Endothelial cell of umbilical vein (primary cell): ENCODE measurements at regions of chrX and their contacts with region 1.

Region 1: DNA sequence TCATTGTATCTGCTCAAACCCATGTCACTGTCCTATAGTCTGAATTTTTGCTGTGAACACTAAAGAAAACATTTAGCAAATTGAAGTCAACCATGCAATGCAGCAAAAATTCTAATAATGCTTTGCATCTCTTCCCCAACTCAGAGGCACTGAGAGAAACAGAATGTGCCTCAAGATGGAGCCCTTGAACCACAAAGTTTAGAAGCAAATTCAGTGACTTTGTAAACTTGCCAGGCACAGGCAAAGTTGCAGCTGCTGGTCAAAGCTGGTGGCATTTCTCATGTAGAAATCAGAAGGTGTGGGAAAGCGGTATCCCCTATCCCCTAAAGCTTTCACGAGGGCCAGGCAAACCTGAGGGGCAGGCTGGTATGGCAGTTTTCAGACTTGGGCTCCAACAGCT is 121.7 kb upstream of the DIPK2B start:
- DNase-seq: peak; percentile 67
- H3K4me3 ChIP-seq: no peak overlapping the region
- H3K27ac ChIP-seq: peak overlapping the region; percentile 10
- H3K4me1 ChIP-seq: peaks cover 3% of the 10 kb centered on the region
- H3K27me3 ChIP-seq: no peaks in the 10 kb centered on the region
- CTCF ChIP-seq: peak; percentile 37 to 45
- POLR2A ChIP-seq: no peak

Region 2: GRCh38 chrX:44989995-44990770 is 332.2 kb before region 1 on chrX:
- CTCF ChIA-PET with region 1: no interaction called
- POLR2A ChIA-PET with region 1: no interaction called
- dilution Hi-C with region 1: no loop called
- intact Hi-C with region 1: no loop called
- DNase-seq: no peak
- H3K4me3 ChIP-seq: no peak overlapping the region
- H3K27ac ChIP-seq: no peak overlapping the region
- H3K4me1 ChIP-seq: no peaks in the 10 kb centered on the region
- H3K27me3 ChIP-seq: no peaks in the 10 kb centered on the region
- CTCF ChIP-seq: no peak
- POLR2A ChIP-seq: no peak

Region 3: GRCh38 chrX:45505214-45505613 is 182.8 kb after region 1 on chrX:
- CTCF ChIA-PET with region 1: interaction called, 6 read pairs
- POLR2A ChIA-PET with region 1: no interaction called
- dilution Hi-C with region 1: no loop called
- intact Hi-C with region 1: loop called (anchors 1 kb)
- DNase-seq: peak; percentile 92
- H3K4me3 ChIP-seq: no peak overlapping the region
- H3K27ac ChIP-seq: peak overlapping the region; percentile 96
- H3K4me1 ChIP-seq: peaks cover 35% of the 10 kb centered on the region
- H3K27me3 ChIP-seq: no peaks in the 10 kb centered on the region
- CTCF ChIP-seq: no peak
- POLR2A ChIP-seq: peak; percentile 36

Region 4: GRCh38 chrX:45557390-45557789 is 235.0 kb after region 1 on chrX:
- CTCF ChIA-PET with region 1: no interaction called
- POLR2A ChIA-PET with region 1: no interaction called
- dilution Hi-C with region 1: no loop called
- intact Hi-C with region 1: loop called (anchors 5 kb)
- DNase-seq: peak; percentile 37
- H3K4me3 ChIP-seq: no peak overlapping the region
- H3K27ac ChIP-seq: no peak overlapping the region
- H3K4me1 ChIP-seq: no peaks in the 10 kb centered on the region
- H3K27me3 ChIP-seq: no peaks in the 10 kb centered on the region
- CTCF ChIP-seq: no peak
- POLR2A ChIP-seq: no peak

Region 5: DNA sequence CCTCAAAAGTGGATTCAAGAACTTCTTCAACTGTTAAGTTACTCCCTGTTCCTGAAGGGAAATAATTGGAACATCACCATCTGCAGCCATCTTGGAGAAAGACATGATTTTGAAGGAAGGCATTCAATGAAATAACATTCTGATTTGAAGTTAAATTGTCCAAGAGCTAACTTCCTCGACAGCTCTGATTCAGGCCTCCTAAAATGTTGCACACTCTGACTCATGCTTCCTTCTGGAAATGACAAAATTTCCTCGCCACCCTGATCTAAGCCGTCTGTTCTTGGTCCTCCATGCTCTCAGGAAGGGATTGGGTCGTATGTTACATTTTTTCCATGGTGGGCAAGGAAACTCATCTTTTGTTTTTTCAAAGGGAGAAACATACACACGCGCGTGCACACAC is 375.2 kb after region 1 on chrX:
- CTCF ChIA-PET with region 1: interaction called, 5 read pairs
- POLR2A ChIA-PET with region 1: no interaction called
- dilution Hi-C with region 1: no loop called
- intact Hi-C with region 1: loop called (anchors 1 kb)
- DNase-seq: peak; percentile 94
- H3K4me3 ChIP-seq: no peak overlapping the region
- H3K27ac ChIP-seq: peak overlapping the region; percentile 92
- H3K4me1 ChIP-seq: peaks cover 22% of the 10 kb centered on the region
- H3K27me3 ChIP-seq: no peaks in the 10 kb centered on the region
- CTCF ChIP-seq: no peak
- POLR2A ChIP-seq: no peak

Region 6: GRCh38 chrX:45743081-45743533 is 420.7 kb after region 1 on chrX:
- CTCF ChIA-PET with region 1: interaction called, 12 read pairs
- POLR2A ChIA-PET with region 1: no interaction called
- dilution Hi-C with region 1: no loop called
- intact Hi-C with region 1: no loop called
- DNase-seq: peak; percentile 61
- H3K4me3 ChIP-seq: no peak overlapping the region
- H3K27ac ChIP-seq: no peak overlapping the region
- H3K4me1 ChIP-seq: no peaks in the 10 kb centered on the region
- H3K27me3 ChIP-seq: no peaks in the 10 kb centered on the region
- CTCF ChIP-seq: peak; percentile 32 to 35
- POLR2A ChIP-seq: peak; percentile 73

Region 7: GRCh38 chrX:45849253-45849862 is 527.0 kb after region 1 on chrX:
- CTCF ChIA-PET with region 1: no interaction called
- POLR2A ChIA-PET with region 1: no interaction called
- dilution Hi-C with region 1: no loop called
- intact Hi-C with region 1: loop called (anchors 10 kb)
- DNase-seq: peak; percentile 57
- H3K4me3 ChIP-seq: peak overlapping the region; percentile 47 to 87 (median 50)
- H3K27ac ChIP-seq: peak overlapping the region; percentile 37
- H3K4me1 ChIP-seq: peaks cover 5% of the 10 kb centered on the region
- H3K27me3 ChIP-seq: peaks cover 0 to 4% of the 10 kb centered on the region in 2 experiments
- CTCF ChIP-seq: peak; percentile 6 to 17
- POLR2A ChIP-seq: no peak

Region 8: GRCh38 chrX:46408553-46409407 is 1086.4 kb after region 1 on chrX:
- CTCF ChIA-PET with region 1: interaction called, 10 read pairs
- POLR2A ChIA-PET with region 1: no interaction called
- dilution Hi-C with region 1: no loop called
- intact Hi-C with region 1: loop called (anchors 5 kb)
- DNase-seq: peak; percentile 74
- H3K4me3 ChIP-seq: no peak overlapping the region
- H3K27ac ChIP-seq: no peak overlapping the region
- H3K4me1 ChIP-seq: no peaks in the 10 kb centered on the region
- H3K27me3 ChIP-seq: no peaks in the 10 kb centered on the region
- CTCF ChIP-seq: peak; percentile 51 to 52
- POLR2A ChIP-seq: no peak